MCF 10A (cell line): ENCODE measurements at regions of chr20 and their contacts with region 1.

Region 1: GRCh38 chr20:49219089-49219923 is at the start of gene DDX27:
- DNase-seq: peak; percentile 99
- H3K4me3 Mint-ChIP-seq: peak within 1 kb of the TSS; percentile 94
- H3K27ac Mint-ChIP-seq: peak within 1 kb of the TSS; percentile 96
- H3K4me1 Mint-ChIP-seq: peaks cover 6% of the 10 kb centered on the region
- H3K27me3 Mint-ChIP-seq: no peaks in the 10 kb centered on the region
- CTCF ChIP-seq: no peak
- total RNA-seq, gene DDX27: 45.7 and 56.4 TPM in 2 replicates

Region 2: DNA sequence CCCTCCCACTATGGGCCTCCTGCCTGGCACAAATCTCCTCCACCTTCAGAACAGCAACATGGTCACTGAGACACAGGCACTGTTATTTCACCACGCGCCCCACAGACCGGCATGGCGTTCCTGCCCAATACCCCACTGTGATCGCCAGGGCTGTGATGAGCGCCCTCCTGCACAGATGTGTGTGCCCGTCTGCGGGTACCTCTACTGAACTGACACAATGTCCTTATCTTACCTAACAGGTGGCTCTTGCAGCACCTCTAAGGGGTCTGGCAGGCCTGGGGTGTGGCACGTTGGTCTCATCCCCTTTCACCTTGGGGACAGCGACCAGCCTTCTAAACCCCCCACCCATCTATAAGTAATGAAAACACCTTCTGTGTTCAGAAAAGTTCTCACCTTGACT is 95.3 kb before region 1 on chr20:
- CTCF ChIA-PET with region 1: interaction called, 35 read pairs
- POLR2A ChIA-PET with region 1: interaction called, 6 read pairs
- intact Hi-C with region 1: no loop called
- DNase-seq: no peak
- H3K4me3 Mint-ChIP-seq: no peak overlapping the region
- H3K27ac Mint-ChIP-seq: no peak overlapping the region
- H3K4me1 Mint-ChIP-seq: no peaks in the 10 kb centered on the region
- H3K27me3 Mint-ChIP-seq: no peaks in the 10 kb centered on the region
- CTCF ChIP-seq: no peak

Region 3: DNA sequence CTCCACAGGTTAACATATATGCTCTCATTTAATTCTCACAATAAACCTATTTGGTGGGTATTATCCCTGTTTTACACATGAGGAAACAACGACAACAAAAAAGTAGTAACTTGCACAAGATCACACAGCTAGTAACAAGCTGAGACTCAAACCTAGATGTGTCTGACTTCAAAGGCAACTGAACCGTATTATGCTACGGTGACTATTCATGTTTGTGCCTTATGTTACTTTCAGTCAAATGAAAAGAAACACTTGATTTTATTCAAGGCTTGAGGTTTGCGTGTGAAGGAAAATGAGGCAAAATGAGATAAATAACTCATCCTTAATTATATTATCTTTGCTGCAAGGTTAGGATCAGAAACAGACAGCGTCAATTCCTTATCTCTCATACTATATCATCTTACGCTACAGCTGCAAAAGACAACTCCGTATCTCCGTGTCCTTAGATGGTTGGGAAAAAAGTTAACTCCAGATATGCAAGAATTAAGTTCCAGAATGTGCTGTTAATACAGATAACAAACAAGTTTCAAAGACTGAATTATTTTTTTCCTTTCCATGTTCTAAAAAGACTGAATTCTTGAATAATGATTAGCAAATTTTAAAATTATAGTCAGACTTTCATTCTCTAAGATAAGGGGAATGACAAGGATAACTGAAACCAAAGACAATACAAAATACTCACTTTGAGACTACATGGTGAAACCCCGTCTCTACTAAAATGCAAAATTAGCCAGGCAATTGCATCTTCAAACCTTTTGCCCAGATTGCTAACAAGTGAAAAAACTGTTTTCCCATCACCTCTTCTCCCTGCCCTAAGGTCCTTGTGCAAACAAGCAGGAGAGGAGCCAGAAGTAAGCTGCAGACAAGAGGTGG is 59.0 kb before region 1 on chr20:
- CTCF ChIA-PET with region 1: interaction called, 17 read pairs
- POLR2A ChIA-PET with region 1: interaction called, 5 read pairs
- intact Hi-C with region 1: no loop called
- DNase-seq: no peak
- H3K4me3 Mint-ChIP-seq: no peak overlapping the region
- H3K27ac Mint-ChIP-seq: no peak overlapping the region
- H3K4me1 Mint-ChIP-seq: peaks cover 10% of the 10 kb centered on the region
- H3K27me3 Mint-ChIP-seq: no peaks in the 10 kb centered on the region
- CTCF ChIP-seq: no peak

Region 4: DNA sequence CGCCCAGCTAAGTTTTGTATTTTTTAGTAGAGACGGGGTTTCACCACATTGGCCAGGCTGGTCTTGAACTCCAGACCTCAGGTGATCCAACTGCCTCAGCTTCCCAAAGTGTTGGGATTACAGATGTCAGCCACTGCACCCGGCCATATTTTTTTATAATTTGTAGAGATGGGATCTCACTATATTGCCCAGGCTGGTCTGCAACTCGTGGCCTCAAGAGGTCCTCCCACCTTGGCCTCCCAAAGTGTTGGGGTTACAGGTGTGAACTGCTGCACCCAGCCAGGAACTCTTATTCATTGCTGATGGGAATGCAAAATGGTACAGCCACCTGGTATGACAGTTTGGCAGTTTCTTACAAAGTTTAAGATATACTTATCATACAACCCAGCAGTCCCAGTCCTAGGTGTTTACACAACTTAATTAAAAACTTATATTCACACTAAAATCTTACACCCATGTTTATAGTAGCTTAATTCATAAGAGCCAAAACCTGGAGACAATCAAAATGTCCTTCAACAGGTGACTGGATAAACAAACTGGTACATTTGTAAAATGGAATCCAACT is 19.5 kb before region 1 on chr20:
- CTCF ChIA-PET with region 1: interaction called, 33 read pairs
- POLR2A ChIA-PET with region 1: interaction called, 11 read pairs
- intact Hi-C with region 1: no loop called
- DNase-seq: no peak
- H3K4me3 Mint-ChIP-seq: no peak overlapping the region
- H3K27ac Mint-ChIP-seq: no peak overlapping the region
- H3K4me1 Mint-ChIP-seq: no peaks in the 10 kb centered on the region
- H3K27me3 Mint-ChIP-seq: no peaks in the 10 kb centered on the region
- CTCF ChIP-seq: no peak

Region 5: DNA sequence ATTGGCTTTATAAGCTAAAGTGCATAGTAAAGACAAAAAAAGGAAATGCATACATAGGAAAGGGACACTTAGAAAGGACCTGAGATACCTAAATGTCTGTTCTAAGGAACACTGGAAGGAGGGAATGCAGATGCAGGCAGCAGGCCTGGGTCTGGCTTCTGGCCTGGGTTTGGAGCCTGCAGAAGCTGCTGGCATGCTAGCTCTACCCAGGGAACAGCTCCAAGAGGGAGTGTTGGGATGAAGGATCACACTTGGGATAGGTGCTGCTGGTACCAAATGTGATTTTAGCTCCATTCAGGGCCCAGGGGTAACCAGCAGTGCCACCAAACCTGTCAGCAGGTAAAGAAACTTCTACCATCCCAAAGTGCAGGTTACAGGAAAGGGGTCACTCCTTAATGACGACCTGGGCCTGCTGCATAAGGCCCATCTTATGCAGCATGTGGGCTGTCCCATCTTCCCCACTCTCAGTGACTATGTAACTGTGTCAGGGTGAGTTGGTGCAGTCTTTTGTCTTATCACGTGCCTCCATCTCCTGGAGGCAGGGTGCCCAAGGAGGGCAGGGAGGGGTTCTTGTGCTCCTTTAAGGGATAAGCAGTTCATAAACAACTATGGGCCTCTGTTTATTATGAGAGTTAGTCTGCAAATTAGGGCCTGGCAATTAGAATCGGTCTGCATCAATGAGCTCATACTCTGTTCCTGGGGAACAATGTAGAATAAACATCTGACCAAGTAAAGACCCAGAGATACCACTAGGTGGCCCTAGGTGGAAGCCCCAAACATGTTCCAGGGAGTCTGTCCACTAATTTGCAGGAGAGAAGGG is 26.8 kb after region 1 on chr20:
- CTCF ChIA-PET with region 1: interaction called, 4 read pairs
- POLR2A ChIA-PET with region 1: interaction called, 10 read pairs
- intact Hi-C with region 1: no loop called
- DNase-seq: peak; percentile 62
- H3K4me3 Mint-ChIP-seq: no peak overlapping the region
- H3K27ac Mint-ChIP-seq: no peak overlapping the region
- H3K4me1 Mint-ChIP-seq: no peaks in the 10 kb centered on the region
- H3K27me3 Mint-ChIP-seq: no peaks in the 10 kb centered on the region
- CTCF ChIP-seq: peak; percentile 52

Region 6: GRCh38 chr20:49713753-49714712 is 494.7 kb after region 1 on chr20 and contains the start of gene B4GALT5:
- CTCF ChIA-PET with region 1: no interaction called
- POLR2A ChIA-PET with region 1: no interaction called
- intact Hi-C with region 1: no loop called
- DNase-seq: no peak
- H3K4me3 Mint-ChIP-seq: peak within 1 kb of the TSS; percentile 87
- H3K27ac Mint-ChIP-seq: peak within 1 kb of the TSS; percentile 94
- H3K4me1 Mint-ChIP-seq: peaks cover 30% of the 10 kb centered on the region
- H3K27me3 Mint-ChIP-seq: no peaks in the 10 kb centered on the region
- CTCF ChIP-seq: no peak
- total RNA-seq, gene B4GALT5: 17.1 and 19.7 TPM in 2 replicates